Activated CD4-positive, alpha-beta T cell treated with anti-CD3 and anti-CD28 coated beads, Interleukin-2, amount 10 ng/mL, durations not matched to agents 24 days and 14 days (primary cell): ENCODE measurements at regions of chr17 and their contacts with region 1.

Region 1: DNA sequence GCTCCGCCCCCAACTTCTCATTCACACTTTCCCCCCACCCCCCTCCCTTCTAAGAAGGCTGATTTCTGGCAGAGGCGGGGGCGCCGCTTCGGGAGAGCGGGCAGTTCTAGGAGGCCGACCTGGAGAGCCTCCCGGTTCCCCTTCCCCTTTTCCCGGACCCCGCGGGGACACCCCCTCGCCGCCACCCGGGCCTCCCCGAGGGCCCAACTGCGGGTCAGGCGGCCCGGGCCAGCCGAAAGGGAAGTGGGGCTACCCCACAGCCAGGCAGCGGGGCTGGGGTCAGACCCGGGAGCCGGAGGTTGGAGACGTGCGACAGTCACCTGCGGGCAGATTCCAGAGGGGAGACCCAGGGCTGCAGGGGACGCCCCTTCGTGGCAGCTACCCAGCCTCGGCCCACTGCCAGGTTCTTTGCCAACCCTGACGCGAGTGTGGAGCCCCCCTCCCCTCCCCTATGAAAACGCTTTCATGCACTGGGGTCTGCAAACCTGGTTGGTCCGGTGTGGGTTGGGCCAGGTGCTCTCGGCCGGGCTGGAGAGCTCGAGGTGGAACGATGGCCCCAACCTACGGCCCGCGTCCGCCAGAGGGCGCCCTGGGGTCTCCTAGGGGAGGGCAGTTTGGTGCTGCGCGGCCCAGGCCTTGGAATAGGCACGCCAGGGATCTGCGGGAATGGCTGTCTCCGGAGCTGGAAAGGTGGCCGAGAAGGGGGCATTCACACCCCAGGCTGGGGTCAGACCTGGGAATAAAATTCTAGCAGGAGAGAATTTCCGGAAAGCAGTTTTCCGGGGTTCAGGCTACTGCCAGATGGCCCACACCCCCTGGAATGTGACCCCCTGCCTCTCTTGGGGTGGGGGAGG is 721 bp upstream of the SOCS3 start:
- DNase-seq: peak; percentile 98
- H3K4me3 Mint-ChIP-seq: peak overlapping the region; percentile 92
- H3K27ac Mint-ChIP-seq: peak overlapping the region; percentile 94
- H3K4me1 Mint-ChIP-seq: peaks cover 39% of the 10 kb centered on the region
- H3K27me3 Mint-ChIP-seq: no peaks in the 10 kb centered on the region

Region 2: GRCh38 chr17:77465358-77466041 is 895.1 kb before region 1 on chr17:
- intact Hi-C with region 1: loop called (anchors 5 kb)
- DNase-seq: peak; percentile 93
- H3K4me3 Mint-ChIP-seq: peak overlapping the region; percentile 77
- H3K27ac Mint-ChIP-seq: peak overlapping the region; percentile 91
- H3K4me1 Mint-ChIP-seq: peaks cover 71% of the 10 kb centered on the region
- H3K27me3 Mint-ChIP-seq: no peaks in the 10 kb centered on the region

Region 3: GRCh38 chr17:78250891-78251794 is 109.5 kb before region 1 on chr17:
- intact Hi-C with region 1: loop called (anchors 1 kb)
- DNase-seq: peak; percentile 96
- H3K4me3 Mint-ChIP-seq: peak overlapping the region; percentile 85
- H3K27ac Mint-ChIP-seq: peak overlapping the region; percentile 84
- H3K4me1 Mint-ChIP-seq: peaks cover 40% of the 10 kb centered on the region
- H3K27me3 Mint-ChIP-seq: no peaks in the 10 kb centered on the region

Region 4: GRCh38 chr17:78313735-78314648 is 46.6 kb before region 1 on chr17:
- intact Hi-C with region 1: loop called (anchors 1 kb)
- DNase-seq: peak; percentile 93
- H3K4me3 Mint-ChIP-seq: peak overlapping the region; percentile 73
- H3K27ac Mint-ChIP-seq: peak overlapping the region; percentile 60
- H3K4me1 Mint-ChIP-seq: peaks cover 42% of the 10 kb centered on the region
- H3K27me3 Mint-ChIP-seq: peaks cover 13% of the 10 kb centered on the region

Region 5: GRCh38 chr17:78421484-78422266 is 61.1 kb after region 1 on chr17:
- intact Hi-C with region 1: loop called (anchors 1 kb)
- DNase-seq: peak; percentile 93
- H3K4me3 Mint-ChIP-seq: no peak overlapping the region
- H3K27ac Mint-ChIP-seq: peak overlapping the region; percentile 77
- H3K4me1 Mint-ChIP-seq: peaks cover 41% of the 10 kb centered on the region
- H3K27me3 Mint-ChIP-seq: no peaks in the 10 kb centered on the region

Region 6: DNA sequence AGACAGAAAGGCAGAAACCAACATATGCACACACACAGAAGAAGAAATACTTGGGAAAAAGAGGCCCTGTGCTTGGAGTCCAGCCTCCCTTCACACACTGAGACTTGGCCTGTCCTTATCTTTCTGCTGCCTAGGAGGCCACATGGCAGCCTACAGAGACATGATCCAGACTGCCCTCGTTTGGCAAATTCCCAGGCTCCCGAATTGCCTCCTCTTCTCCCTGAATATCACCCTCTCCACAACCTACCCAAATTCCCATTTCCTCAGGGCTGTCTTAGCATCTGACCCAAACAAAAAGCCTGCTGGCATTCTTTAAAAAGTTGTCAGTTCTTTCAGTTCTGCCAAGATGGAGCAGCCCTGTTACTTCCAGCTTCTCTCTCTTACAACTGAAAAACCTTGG is 156.8 kb after region 1 on chr17:
- intact Hi-C with region 1: no loop called
- DNase-seq: no peak
- H3K4me3 Mint-ChIP-seq: no peak overlapping the region
- H3K27ac Mint-ChIP-seq: no peak overlapping the region
- H3K4me1 Mint-ChIP-seq: no peaks in the 10 kb centered on the region
- H3K27me3 Mint-ChIP-seq: peaks cover 22% of the 10 kb centered on the region